HEK293 (cell line): ENCODE measurements at regions of chr9 and their contacts with region 1.

Region 1: DNA sequence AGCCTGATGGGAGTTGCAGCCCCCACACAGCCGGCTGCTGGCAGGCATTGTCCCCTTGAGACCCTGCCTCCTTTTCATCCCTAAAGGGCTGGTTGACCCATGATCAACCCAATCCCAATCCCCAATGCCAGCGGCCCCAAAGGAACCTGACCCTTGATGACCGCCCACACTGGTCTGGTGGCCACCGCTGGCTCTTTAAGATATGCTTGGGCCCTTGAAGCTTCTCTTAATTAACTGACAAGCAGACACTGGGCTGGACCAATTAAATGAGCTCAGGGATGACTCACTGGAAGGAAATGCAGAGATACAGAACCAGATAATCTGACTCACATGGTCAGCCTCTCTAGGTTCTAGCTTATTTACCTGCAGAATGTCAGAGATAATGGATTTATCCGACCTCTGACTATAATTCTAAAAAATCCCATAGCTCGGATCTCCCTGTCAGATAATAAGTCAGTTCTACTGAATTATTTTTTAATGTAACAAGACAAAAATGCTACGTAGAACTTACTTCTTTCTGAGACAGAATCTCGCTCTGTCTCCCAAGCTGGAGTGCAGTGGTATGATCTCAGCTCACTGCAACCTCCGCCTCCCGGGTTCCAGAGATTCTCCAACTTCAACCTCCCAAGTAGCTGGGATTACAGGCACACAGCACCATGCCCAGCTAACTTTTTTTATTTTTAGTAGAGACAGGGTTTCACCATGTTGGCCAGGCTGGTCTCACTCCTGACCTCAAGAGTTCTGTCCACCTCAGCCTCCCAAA is 11.1 kb upstream of the MLANA start:
- H3K4me3 ChIP-seq: peak overlapping the region; percentile 19
- H3K27ac ChIP-seq: no peak overlapping the region
- H3K4me1 ChIP-seq: no peaks in the 10 kb centered on the region
- CTCF ChIP-seq: no peak

Region 2: GRCh38 chr9:5644501-5644900 is 235.1 kb before region 1 on chr9:
- CTCF ChIA-PET with region 1: no interaction called
- POLR2A ChIA-PET with region 1: no interaction called
- H3K4me3 ChIP-seq: no peak overlapping the region
- H3K27ac ChIP-seq: no peak overlapping the region
- H3K4me1 ChIP-seq: no peaks in the 10 kb centered on the region
- CTCF ChIP-seq: no peak

Region 3: DNA sequence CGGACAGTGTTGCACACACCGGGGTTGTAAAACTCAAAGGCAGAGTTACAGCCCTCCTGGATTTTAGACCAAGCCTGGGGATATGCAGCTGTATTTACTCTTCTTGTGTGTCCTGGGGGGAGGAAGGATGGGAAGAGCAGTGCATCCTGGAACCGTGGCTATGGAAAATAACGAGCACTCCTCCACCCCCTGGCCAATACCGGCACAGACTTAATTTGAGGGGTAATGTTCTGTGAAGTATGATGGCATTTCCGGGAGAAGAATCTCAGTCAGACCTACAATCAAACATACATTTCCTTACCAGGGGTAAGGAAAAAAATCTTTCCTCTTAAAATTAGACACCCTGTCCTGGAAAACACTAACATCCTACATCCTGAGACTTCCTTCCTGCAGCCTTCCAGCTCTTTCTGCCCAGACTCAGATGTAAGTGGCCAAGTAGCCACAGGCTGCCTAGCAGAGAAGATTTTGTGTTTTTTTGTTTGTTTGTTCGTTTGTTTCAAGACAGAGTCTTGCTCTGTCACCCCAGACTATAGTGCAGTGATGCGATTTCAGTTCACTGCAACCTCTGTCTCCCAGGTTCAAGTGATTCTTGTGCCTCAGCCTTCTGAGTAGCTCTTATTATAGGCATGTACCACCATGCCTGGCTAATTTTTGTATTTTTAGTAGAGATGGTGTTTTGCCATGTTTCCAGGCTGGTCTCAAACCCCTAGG is 35.7 kb before region 1 on chr9:
- CTCF ChIA-PET with region 1: interaction called, 4 read pairs
- POLR2A ChIA-PET with region 1: interaction called, 11 read pairs
- H3K4me3 ChIP-seq: no peak overlapping the region
- H3K27ac ChIP-seq: peak overlapping the region; percentile 83
- H3K4me1 ChIP-seq: peaks cover 21% of the 10 kb centered on the region
- CTCF ChIP-seq: no peak

Region 4: GRCh38 chr9:5869315-5870019 is 10.1 kb before region 1 on chr9:
- CTCF ChIA-PET with region 1: interaction called, 14 read pairs
- POLR2A ChIA-PET with region 1: no interaction called
- H3K4me3 ChIP-seq: no peak overlapping the region
- H3K27ac ChIP-seq: no peak overlapping the region
- H3K4me1 ChIP-seq: no peaks in the 10 kb centered on the region
- CTCF ChIP-seq: no peak